PC-9 (cell line): ENCODE measurements at regions of chr16 and their contacts with region 1.

Region 1: DNA sequence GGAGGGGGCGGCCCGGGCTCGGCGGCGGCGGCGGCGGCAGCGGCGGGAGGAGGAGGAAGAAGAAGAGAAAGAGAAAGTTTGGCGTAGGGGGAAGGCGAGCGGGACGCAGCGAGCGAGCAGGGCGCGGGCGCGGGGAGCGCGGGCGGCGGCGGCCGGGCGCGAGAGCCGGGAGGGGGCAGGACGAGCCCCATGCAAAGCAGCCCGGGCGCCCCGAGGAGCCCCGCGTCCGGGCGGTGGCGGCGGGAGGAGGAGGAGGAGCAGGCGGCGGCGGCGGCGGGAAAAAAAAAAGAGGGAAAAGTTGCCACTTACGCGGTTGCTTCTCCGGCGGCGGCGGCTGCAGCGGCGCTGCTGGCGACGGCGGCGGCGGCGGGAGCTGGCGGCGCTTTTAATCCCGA is 10.3 kb upstream of the ZFHX3 start:
- DNase-seq: peak in 1 of 2 experiments; percentile 64
- H3K4me3 ChIP-seq: peak overlapping the region; percentile 91; the same call in 1 of the 2 replicates
- H3K27ac ChIP-seq: 0 out of 2 replicates have a peak overlapping the region, but pooled peaks have one; percentile 36
- H3K4me1 ChIP-seq: peaks cover 50% of the 10 kb centered on the region
- H3K27me3 ChIP-seq: no peaks in the 10 kb centered on the region
- CTCF ChIP-seq: no peak

Region 2: DNA sequence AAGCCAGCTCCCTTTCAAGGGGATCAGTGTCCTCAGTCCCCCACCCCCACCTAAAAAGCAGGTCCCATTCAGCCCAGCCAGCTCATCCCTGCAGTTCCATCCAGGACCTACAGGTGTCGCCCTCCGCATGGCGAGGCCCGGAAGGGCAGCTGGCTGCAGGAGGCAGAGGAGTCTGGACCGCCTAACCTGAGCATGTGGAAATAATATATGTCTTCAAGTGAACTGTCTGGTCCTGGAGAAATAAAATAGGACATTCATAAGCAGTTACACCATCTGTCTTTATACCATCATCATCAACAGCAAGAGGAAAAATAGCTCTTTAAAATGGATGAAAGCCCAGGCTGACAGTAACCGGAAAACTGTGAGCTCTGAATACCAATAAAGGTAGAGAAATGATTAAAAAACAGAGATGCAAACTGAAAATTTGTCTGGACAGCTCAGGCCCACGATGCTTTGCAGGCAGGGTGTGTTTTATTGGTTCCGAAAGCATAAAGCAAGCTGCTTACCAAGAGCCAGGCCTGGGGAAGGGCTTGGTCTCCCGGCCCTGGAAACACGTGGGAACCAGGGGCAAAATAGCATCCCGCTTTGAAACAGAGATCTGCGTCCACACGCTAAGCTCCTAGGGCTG is 225.5 kb before region 1 on chr16:
- CTCF ChIA-PET with region 1: interaction called, 16 read pairs
- POLR2A ChIA-PET with region 1: interaction called, 3 read pairs
- intact Hi-C with region 1: no loop called
- DNase-seq: peak; percentile 40 to 83
- H3K4me3 ChIP-seq: no peak overlapping the region
- H3K27ac ChIP-seq: no peak overlapping the region
- H3K4me1 ChIP-seq: 0 out of 2 replicates have a peak, but pooled peaks cover 5% of the 10 kb centered on the region
- H3K27me3 ChIP-seq: no peaks in the 10 kb centered on the region
- CTCF ChIP-seq: peak; percentile 99

Region 3: DNA sequence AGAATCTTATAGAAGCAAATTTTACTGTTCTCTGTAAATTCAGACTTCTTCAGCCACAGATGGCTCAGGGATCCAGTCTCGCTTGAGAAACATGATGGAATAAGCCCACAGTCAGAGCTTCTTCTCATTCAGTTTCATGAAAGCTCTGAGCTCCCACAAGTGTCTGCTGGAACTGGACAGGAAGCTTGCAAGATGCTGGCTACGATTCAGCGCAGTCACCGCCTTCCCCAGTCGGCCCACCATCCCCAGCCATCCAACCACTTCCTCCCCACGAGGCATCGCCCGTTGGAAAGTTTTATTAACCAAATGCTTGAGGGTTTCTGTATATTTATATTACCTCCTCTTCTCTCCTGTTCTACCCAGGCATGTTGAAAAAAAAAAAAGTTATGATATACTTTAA is 182.0 kb before region 1 on chr16:
- CTCF ChIA-PET with region 1: no interaction called
- POLR2A ChIA-PET with region 1: interaction called, 7 read pairs
- intact Hi-C with region 1: loop called (anchors 1 kb)
- DNase-seq: peak; percentile 46 to 58
- H3K4me3 ChIP-seq: peak overlapping the region; percentile 18; the same call in 1 of the 2 replicates
- H3K27ac ChIP-seq: peak overlapping the region; percentile 95
- H3K4me1 ChIP-seq: peaks cover 46% of the 10 kb centered on the region
- H3K27me3 ChIP-seq: no peaks in the 10 kb centered on the region
- CTCF ChIP-seq: no peak

Region 4: GRCh38 chr16:72995151-72995881 is 62.9 kb before region 1 on chr16:
- CTCF ChIA-PET with region 1: interaction called, 3 read pairs
- POLR2A ChIA-PET with region 1: interaction called, 6 read pairs
- intact Hi-C with region 1: loop called (anchors 1 kb)
- DNase-seq: no peak
- H3K4me3 ChIP-seq: no peak overlapping the region
- H3K27ac ChIP-seq: peak overlapping the region; percentile 91
- H3K4me1 ChIP-seq: peaks cover 86% of the 10 kb centered on the region
- H3K27me3 ChIP-seq: no peaks in the 10 kb centered on the region
- CTCF ChIP-seq: peak; percentile 68

Region 5: DNA sequence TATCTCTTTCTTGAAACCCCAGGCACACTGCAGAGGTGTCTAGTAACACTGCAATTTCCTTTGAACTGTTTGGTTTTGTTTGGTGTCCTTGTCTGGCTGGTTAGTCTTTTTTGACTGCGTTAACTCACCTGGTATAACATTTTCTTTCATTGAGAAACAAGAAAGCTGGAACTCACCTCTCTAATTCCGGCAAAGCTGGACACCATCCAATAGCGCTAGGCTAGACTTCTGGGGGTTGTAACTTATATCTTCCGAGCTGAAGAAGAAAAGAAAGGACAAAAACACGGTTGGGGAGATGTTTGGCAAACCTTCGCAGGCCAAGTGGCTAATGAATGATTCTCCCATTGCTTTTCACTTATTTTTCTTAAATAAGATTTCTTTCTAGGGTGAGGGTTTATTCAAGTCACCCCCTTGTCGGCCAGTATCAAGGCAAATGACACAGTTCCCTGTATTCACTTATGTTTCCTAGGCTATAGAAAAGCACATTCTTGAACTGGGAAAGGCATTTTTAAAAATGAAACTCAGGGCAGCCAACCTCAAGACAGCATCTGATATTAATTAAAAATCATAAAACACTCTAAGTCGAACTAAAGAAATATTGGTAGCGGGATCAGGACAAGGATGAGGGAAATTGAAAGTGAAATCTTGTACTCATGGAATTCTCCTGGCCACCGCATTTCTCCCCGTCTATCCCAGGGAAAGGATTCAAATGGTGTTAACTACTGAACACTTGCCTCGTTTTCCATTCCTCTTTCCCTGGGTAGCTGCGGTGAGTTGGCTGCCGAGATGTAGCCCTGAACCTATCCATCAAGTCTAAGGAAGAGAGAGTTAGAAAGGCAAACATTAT is 85.6 kb after region 1 on chr16:
- CTCF ChIA-PET with region 1: no interaction called
- POLR2A ChIA-PET with region 1: no interaction called
- intact Hi-C with region 1: no loop called
- DNase-seq: no peak
- H3K4me3 ChIP-seq: no peak overlapping the region
- H3K27ac ChIP-seq: no peak overlapping the region
- H3K4me1 ChIP-seq: no peaks in the 10 kb centered on the region
- H3K27me3 ChIP-seq: 0 out of 2 replicates have a peak, but pooled peaks cover 10% of the 10 kb centered on the region
- CTCF ChIP-seq: no peak

Region 6: GRCh38 chr16:73172241-73172972 is 114.2 kb after region 1 on chr16:
- CTCF ChIA-PET with region 1: no interaction called
- POLR2A ChIA-PET with region 1: no interaction called
- intact Hi-C with region 1: loop called (anchors 2 kb)
- DNase-seq: peak in 1 of 2 experiments; percentile 23
- H3K4me3 ChIP-seq: no peak overlapping the region
- H3K27ac ChIP-seq: no peak overlapping the region
- H3K4me1 ChIP-seq: peaks cover 6% of the 10 kb centered on the region; the same call in 1 of the 2 replicates
- H3K27me3 ChIP-seq: no peaks in the 10 kb centered on the region
- CTCF ChIP-seq: peak; percentile 54